ENCODE measurements at regions of chr14 and their contacts with region 1.

Region 1: DNA sequence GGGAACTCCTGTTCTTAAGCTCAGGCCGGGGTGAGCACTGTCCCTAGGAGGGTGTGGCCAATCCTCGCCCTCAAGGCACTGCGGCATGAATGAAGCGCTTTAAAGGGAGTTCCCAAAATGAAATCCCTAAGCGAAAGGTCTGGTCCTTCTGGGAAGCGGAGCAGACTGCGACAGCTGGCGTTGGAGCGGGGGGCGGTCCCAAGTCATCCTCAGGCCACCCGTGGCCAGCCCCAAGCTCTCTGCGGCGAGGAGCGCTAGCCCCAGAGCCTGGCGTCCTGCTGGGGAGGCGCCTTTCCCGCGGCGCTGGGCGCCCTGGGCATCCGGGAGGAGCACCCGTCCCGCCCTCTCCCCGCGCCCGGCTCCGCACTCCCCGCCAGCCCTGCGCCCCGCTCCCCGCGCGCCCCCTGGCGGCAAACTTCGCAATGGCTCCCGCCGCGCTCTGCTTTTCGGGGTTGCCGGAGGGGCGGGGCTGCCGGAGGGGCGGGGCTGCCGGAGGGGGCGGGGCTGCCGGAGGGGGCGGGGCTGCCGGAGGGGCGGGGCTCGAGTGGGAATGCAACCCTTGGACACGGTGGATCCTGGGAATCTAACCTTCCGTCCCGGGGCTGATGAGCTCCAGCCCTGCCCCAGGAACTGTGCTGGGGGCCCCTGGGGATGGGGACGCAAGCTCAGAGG is 25.4 kb downstream of the ZBTB42 start:
- DNase-seq: peak in 1 of 2 experiments; percentile 100
- H3K4me3 ChIP-seq: peak overlapping the region; percentile 45 to 83 (median 76)
- H3K27ac ChIP-seq: no peak overlapping the region
- H3K4me1 ChIP-seq: peaks cover 0 to 7% (median 5%) of the 10 kb centered on the region in 4 experiments; a peak in 4 of 7 replicates
- H3K27me3 ChIP-seq: peaks cover 0 to 26% (median 19%) of the 10 kb centered on the region in 4 experiments; a peak in 6 of 7 replicates
- CTCF ChIP-seq: peak; percentile 37 to 78 (median 74)
- EP300 ChIP-seq: no peak
- POLR2A ChIP-seq: no peak
- RAD21 ChIP-seq: peak; percentile 53 to 66

Region 2: GRCh38 chr14:104777486-104778249 is 48.7 kb before region 1 on chr14:
- CTCF ChIA-PET with region 1: interaction called, 35 read pairs
- POLR2A ChIA-PET with region 1: no interaction called
- DNase-seq: peak in 1 of 2 experiments; percentile 62
- H3K4me3 ChIP-seq: no peak overlapping the region
- H3K27ac ChIP-seq: no peak overlapping the region
- H3K4me1 ChIP-seq: no peaks in the 10 kb centered on the region
- H3K27me3 ChIP-seq: no peaks in the 10 kb centered on the region
- CTCF ChIP-seq: peak in 2 of 3 experiments; percentile 39 to 40; a peak in 3 of 4 replicates
- EP300 ChIP-seq: no peak
- POLR2A ChIP-seq: no peak
- RAD21 ChIP-seq: peak; percentile 10 to 36; a peak in 2 of 4 replicates

Region 3: DNA sequence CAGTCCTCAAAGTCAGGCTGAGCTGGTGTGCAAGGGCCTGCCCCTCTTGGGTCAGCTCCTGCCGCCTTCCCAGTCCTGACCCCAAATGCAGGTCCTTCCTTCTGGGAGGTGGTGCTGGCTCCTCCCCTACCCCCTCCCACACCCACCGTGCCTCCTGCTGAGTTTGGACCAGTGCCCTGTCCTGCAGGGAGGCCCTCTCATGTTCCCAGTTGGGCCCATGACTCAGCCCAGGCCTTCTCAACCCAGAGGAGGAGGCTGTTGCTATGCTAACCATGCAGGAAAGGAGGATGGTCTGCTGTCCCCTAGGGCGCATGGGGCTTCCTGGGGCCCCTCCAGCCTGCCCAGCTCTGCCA is 21.0 kb before region 1 on chr14:
- CTCF ChIA-PET with region 1: interaction called, 12 read pairs
- POLR2A ChIA-PET with region 1: interaction called, 5 read pairs
- DNase-seq: no peak
- H3K4me3 ChIP-seq: no peak overlapping the region
- H3K27ac ChIP-seq: no peak overlapping the region
- H3K4me1 ChIP-seq: peaks cover 0 to 4% (median 2%) of the 10 kb centered on the region in 4 experiments; a peak in 3 of 7 replicates
- H3K27me3 ChIP-seq: peaks cover 14 to 28% (median 20%) of the 10 kb centered on the region in 4 experiments
- CTCF ChIP-seq: no peak
- EP300 ChIP-seq: no peak
- POLR2A ChIP-seq: no peak
- RAD21 ChIP-seq: no peak

Region 4: DNA sequence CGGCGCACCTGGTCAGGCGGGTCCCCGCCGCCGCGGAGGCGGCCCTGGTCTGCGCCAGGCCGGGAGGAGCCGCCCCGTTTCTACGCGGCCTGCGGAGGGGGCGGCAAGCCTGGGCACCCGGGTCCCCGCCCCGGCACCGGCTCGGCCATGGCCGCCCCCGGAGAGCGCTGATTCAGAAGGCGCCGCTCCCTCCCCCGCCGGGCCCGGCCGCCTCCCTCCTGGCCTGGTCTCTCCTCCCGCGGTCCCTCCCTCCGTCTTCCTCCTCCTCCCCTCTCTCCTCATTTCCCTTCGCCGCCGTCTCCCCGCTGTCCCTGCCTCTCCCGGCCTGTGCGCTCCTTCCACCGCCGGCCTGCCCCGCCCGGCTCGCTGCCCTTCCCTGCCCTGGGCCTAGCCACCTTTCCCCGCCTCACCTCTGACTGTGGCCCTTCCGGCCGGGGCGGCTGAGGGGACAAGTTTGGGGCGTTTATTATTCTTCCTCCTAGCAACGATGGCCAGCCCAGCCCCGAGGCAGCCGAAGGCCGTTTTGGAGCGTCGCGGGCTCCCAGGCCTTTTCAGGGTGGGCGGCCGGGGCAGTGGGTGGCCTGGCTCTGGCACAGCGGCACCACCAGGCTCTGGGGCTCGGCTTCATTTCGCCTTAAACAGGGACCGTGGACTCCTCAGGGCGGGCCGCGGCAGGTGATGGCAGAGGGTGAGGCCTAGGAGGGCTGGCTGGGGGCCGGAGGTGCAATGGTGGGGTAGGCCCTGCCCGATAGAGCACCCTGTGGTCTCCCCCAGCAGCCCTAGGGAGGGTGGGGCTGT is 39.5 kb after region 1 on chr14:
- CTCF ChIA-PET with region 1: interaction called, 31 read pairs
- POLR2A ChIA-PET with region 1: interaction called, 14 read pairs
- DNase-seq: peak in 1 of 2 experiments; percentile 77
- H3K4me3 ChIP-seq: peak overlapping the region; percentile 48 to 79 (median 61)
- H3K27ac ChIP-seq: no peak overlapping the region
- H3K4me1 ChIP-seq: peaks cover 0 to 13% (median 9%) of the 10 kb centered on the region in 4 experiments; a peak in 5 of 7 replicates
- H3K27me3 ChIP-seq: no peaks in the 10 kb centered on the region
- CTCF ChIP-seq: no peak
- EP300 ChIP-seq: no peak
- POLR2A ChIP-seq: no peak
- RAD21 ChIP-seq: no peak

Region 5: DNA sequence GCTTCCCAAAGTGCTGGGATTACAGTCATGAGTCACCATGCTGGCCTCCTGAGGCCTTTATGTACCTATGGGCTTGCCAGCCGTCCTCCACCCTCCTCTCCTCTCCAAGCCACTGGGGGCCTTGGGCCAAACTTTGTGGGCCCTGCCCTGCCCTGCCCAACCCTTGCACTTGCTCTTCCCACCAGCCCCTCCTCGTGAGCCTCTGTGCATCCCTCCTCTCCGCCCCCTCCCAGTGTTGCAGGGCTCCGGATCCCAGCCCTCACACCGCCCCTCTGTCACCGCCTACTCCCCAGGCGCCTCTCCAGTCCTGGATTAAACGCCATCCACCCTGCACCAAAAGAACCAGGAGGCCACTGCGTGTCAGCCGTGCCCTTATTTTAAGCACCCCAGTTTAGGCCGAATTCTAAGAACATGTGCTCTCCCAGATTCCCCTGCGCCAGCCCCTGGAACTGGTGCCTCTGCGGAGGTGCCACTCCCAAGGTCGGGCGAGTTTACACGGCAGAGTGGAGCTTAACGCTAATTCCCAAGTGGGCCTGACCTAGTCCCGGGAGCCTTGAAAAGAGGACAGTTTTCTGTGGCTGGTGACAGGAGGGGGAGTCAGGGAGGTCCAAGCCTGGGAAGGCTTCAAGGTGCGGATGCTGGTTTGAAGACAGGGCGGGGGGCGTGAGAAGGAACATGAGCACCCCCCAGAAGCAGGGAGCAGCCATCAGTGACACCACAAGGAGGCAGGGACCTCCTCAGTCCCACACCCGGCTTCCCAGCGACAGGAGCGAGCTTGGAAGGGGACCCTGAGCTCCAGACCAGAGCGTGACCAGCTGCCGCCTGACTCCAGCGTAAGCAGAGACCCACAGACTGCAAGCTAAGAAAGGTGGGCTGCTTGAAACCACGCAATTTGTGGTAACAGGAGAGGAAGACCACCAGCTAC is 215.8 kb after region 1 on chr14:
- CTCF ChIA-PET with region 1: no interaction called
- POLR2A ChIA-PET with region 1: no interaction called
- DNase-seq: no peak
- H3K4me3 ChIP-seq: no peak overlapping the region
- H3K27ac ChIP-seq: no peak overlapping the region
- H3K4me1 ChIP-seq: peaks cover 0 to 2% (median under 1%) of the 10 kb centered on the region in 4 experiments; a peak in 2 of 7 replicates
- H3K27me3 ChIP-seq: peaks cover 0 to 8% (median 7%) of the 10 kb centered on the region in 4 experiments; a peak in 4 of 7 replicates
- CTCF ChIP-seq: no peak
- EP300 ChIP-seq: no peak
- POLR2A ChIP-seq: no peak
- RAD21 ChIP-seq: no peak